CD8-positive, alpha-beta T cell (primary cell): ENCODE measurements at regions of chr9 and their contacts with region 1.

Region 1: GRCh38 chr9:34637356-34638137 is at the start of gene SIGMAR1:
- DNase-seq: peak; percentile 85 to 96 (median 93)
- ATAC-seq: peak; percentile 95
- H3K4me3 ChIP-seq: peak within 1 kb of the TSS; percentile 63 to 69
- H3K4me3 Mint-ChIP-seq: peak within 1 kb of the TSS; percentile 86
- H3K27ac ChIP-seq: peak within 1 kb of the TSS; percentile 55 to 86
- H3K27ac Mint-ChIP-seq: peak within 1 kb of the TSS; percentile 86
- H3K4me1 ChIP-seq: peaks cover 15% of the 10 kb centered on the region
- H3K4me1 Mint-ChIP-seq: peaks cover 36% of the 10 kb centered on the region
- H3K27me3 ChIP-seq: no peaks in the 10 kb centered on the region
- H3K27me3 Mint-ChIP-seq: no peaks in the 10 kb centered on the region
- CTCF ChIP-seq: no peak
- total RNA-seq, gene SIGMAR1: 8.5 to 9.6 TPM

Region 2: GRCh38 chr9:33130508-33130911 is 1507.0 kb before region 1 on chr9:
- CTCF ChIA-PET with region 1: no interaction called
- POLR2A ChIA-PET with region 1: no interaction called
- intact Hi-C with region 1: loop called in 1 of 2 experiments (anchors 5 kb)
- DNase-seq: peak in 2 of 9 experiments; percentile 49 to 68
- ATAC-seq: peak; percentile 74
- H3K4me3 ChIP-seq: no peak overlapping the region
- H3K4me3 Mint-ChIP-seq: no peak overlapping the region
- H3K27ac ChIP-seq: peak overlapping the region in 1 of 2 experiments; percentile 83
- H3K27ac Mint-ChIP-seq: peak overlapping the region; percentile 89
- H3K4me1 ChIP-seq: peaks cover 16% of the 10 kb centered on the region
- H3K4me1 Mint-ChIP-seq: peaks cover 53% of the 10 kb centered on the region
- H3K27me3 ChIP-seq: no peaks in the 10 kb centered on the region
- H3K27me3 Mint-ChIP-seq: no peaks in the 10 kb centered on the region
- CTCF ChIP-seq: no peak

Region 3: GRCh38 chr9:34458013-34458958 is 179.3 kb before region 1 on chr9 and contains the starts of genes DNAI1 and FAM219A:
- CTCF ChIA-PET with region 1: interaction called, 11 read pairs
- POLR2A ChIA-PET with region 1: interaction called, 3 read pairs
- intact Hi-C with region 1: loop called (anchors 2 to 5 kb)
- DNase-seq: peak; percentile 98 to 99 (median 99)
- ATAC-seq: peak; percentile 96
- H3K4me3 ChIP-seq: peak within 1 kb of the TSS; percentile 61 to 67
- H3K4me3 Mint-ChIP-seq: peak within 1 kb of the TSS; percentile 91
- H3K27ac ChIP-seq: peak within 1 kb of the TSS in 1 of 2 experiments; percentile 29
- H3K27ac Mint-ChIP-seq: peak within 1 kb of the TSS; percentile 46
- H3K4me1 ChIP-seq: peaks cover 14% of the 10 kb centered on the region
- H3K4me1 Mint-ChIP-seq: peaks cover 30% of the 10 kb centered on the region
- H3K27me3 ChIP-seq: no peaks in the 10 kb centered on the region
- H3K27me3 Mint-ChIP-seq: no peaks in the 10 kb centered on the region
- CTCF ChIP-seq: no peak
- total RNA-seq, gene DNAI1: not detected
- total RNA-seq, gene FAM219A: 5.5 to 5.9 TPM

Region 4: GRCh38 chr9:34591248-34591916 is 46.2 kb before region 1 on chr9:
- CTCF ChIA-PET with region 1: interaction called, 11 read pairs
- POLR2A ChIA-PET with region 1: no interaction called
- intact Hi-C with region 1: no loop called
- DNase-seq: peak; percentile 59 to 86 (median 80)
- ATAC-seq: peak; percentile 83
- H3K4me3 ChIP-seq: peak overlapping the region; percentile 54 to 73
- H3K4me3 Mint-ChIP-seq: peak overlapping the region; percentile 78
- H3K27ac ChIP-seq: no peak overlapping the region
- H3K27ac Mint-ChIP-seq: no peak overlapping the region
- H3K4me1 ChIP-seq: peaks cover 9% of the 10 kb centered on the region
- H3K4me1 Mint-ChIP-seq: peaks cover 32% of the 10 kb centered on the region
- H3K27me3 ChIP-seq: peaks cover 26 to 47% of the 10 kb centered on the region in 2 experiments
- H3K27me3 Mint-ChIP-seq: peaks cover 70% of the 10 kb centered on the region
- CTCF ChIP-seq: peak; percentile 74

Region 5: GRCh38 chr9:34611829-34612630 is 25.5 kb before region 1 on chr9 and contains the start of gene RPP25L:
- CTCF ChIA-PET with region 1: interaction called, 230 read pairs
- POLR2A ChIA-PET with region 1: interaction called, 7 read pairs
- intact Hi-C with region 1: loop called (anchors 1 kb)
- DNase-seq: peak; percentile 65 to 92 (median 85)
- ATAC-seq: peak; percentile 95
- H3K4me3 ChIP-seq: peak within 1 kb of the TSS; percentile 88 to 93
- H3K4me3 Mint-ChIP-seq: peak within 1 kb of the TSS; percentile 85
- H3K27ac ChIP-seq: peak within 1 kb of the TSS; percentile 77 to 91
- H3K27ac Mint-ChIP-seq: peak within 1 kb of the TSS; percentile 91
- H3K4me1 ChIP-seq: peaks cover 17% of the 10 kb centered on the region
- H3K4me1 Mint-ChIP-seq: peaks cover 23% of the 10 kb centered on the region
- H3K27me3 ChIP-seq: no peaks in the 10 kb centered on the region
- H3K27me3 Mint-ChIP-seq: no peaks in the 10 kb centered on the region
- CTCF ChIP-seq: no peak
- total RNA-seq, gene RPP25L: 4.4 to 5.1 TPM

Region 6: GRCh38 chr9:34701769-34702736 is 64.5 kb after region 1 on chr9:
- CTCF ChIA-PET with region 1: interaction called, 13 read pairs
- POLR2A ChIA-PET with region 1: no interaction called
- intact Hi-C with region 1: loop called in 1 of 2 experiments (anchors 2 kb)
- DNase-seq: peak; percentile 53 to 85 (median 81)
- ATAC-seq: peak; percentile 81
- H3K4me3 ChIP-seq: peak overlapping the region; percentile 46 to 53
- H3K4me3 Mint-ChIP-seq: peak overlapping the region; percentile 77
- H3K27ac ChIP-seq: no peak overlapping the region
- H3K27ac Mint-ChIP-seq: no peak overlapping the region
- H3K4me1 ChIP-seq: peaks cover 8% of the 10 kb centered on the region
- H3K4me1 Mint-ChIP-seq: peaks cover 14% of the 10 kb centered on the region
- H3K27me3 ChIP-seq: no peaks in the 10 kb centered on the region
- H3K27me3 Mint-ChIP-seq: peaks cover 11% of the 10 kb centered on the region
- CTCF ChIP-seq: peak; percentile 98